Mammary epithelial cell (primary cell): ENCODE measurements at regions of chr7 and their contacts with region 1.

Region 1: GRCh38 chr7:29408841-29409243 is 154.8 kb upstream of the PRR15 start:
- DNase-seq: peak; percentile 70
- H3K4me3 ChIP-seq: no peak overlapping the region
- H3K27ac ChIP-seq: no peak overlapping the region
- H3K4me1 ChIP-seq: peaks cover 7% of the 10 kb centered on the region
- H3K27me3 ChIP-seq: no peaks in the 10 kb centered on the region
- CTCF ChIP-seq: peak; percentile 74 to 77

Region 2: GRCh38 chr7:28298870-28299518 is 1109.8 kb before region 1 on chr7:
- CTCF ChIA-PET with region 1: no interaction called
- dilution Hi-C with region 1: no loop called
- in situ Hi-C with region 1: no loop called
- intact Hi-C with region 1: loop called (anchors 2 kb)
- DNase-seq: peak; percentile 60
- H3K4me3 ChIP-seq: no peak overlapping the region
- H3K27ac ChIP-seq: no peak overlapping the region
- H3K4me1 ChIP-seq: peaks cover 13% of the 10 kb centered on the region
- H3K27me3 ChIP-seq: no peaks in the 10 kb centered on the region
- CTCF ChIP-seq: peak; percentile 54 to 68

Region 3: DNA sequence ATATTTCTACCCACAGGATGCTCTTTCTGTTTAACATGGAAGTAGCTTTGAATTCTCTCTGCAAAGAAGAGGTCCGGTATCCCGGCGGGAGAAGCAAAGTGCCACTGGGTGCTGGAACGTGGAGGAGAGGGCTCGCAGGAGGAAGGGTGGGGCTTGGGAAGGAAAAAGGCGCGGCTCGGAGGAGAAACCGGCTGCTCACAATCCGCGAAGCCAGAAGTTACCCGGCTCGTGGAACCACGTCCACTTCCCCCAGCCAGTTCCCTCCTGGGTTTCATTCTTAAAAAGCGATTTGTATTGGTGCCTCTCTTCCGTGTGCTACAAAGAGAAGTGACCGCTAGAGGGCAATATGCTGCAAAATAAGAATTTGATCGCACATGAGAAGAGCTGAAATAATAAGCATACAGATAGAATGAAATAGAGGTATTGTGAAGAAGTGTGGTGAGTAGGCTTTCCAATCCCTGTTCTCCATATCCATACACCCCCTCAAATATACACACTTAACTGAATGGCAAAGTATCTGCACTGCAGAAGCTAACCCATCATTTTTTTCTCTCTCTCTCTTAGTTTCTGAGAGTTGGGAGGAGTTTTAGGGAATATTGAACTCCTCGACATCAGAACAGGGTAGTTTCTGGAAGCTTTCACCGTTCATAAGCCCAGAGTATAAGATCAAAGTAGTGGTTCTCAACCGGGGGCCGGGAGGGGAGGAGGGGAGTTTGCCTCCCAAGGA is 481.8 kb before region 1 on chr7:
- CTCF ChIA-PET with region 1: interaction called, 11 read pairs
- dilution Hi-C with region 1: loop called (anchors 5 kb)
- in situ Hi-C with region 1: loop called (anchors 5 kb)
- intact Hi-C with region 1: loop called (anchors 1 kb)
- DNase-seq: peak; percentile 74
- H3K4me3 ChIP-seq: peak overlapping the region; percentile 52 to 59 (median 58)
- H3K27ac ChIP-seq: no peak overlapping the region
- H3K4me1 ChIP-seq: peaks cover 5% of the 10 kb centered on the region
- H3K27me3 ChIP-seq: no peaks in the 10 kb centered on the region
- CTCF ChIP-seq: peak; percentile 76 to 77

Region 4: DNA sequence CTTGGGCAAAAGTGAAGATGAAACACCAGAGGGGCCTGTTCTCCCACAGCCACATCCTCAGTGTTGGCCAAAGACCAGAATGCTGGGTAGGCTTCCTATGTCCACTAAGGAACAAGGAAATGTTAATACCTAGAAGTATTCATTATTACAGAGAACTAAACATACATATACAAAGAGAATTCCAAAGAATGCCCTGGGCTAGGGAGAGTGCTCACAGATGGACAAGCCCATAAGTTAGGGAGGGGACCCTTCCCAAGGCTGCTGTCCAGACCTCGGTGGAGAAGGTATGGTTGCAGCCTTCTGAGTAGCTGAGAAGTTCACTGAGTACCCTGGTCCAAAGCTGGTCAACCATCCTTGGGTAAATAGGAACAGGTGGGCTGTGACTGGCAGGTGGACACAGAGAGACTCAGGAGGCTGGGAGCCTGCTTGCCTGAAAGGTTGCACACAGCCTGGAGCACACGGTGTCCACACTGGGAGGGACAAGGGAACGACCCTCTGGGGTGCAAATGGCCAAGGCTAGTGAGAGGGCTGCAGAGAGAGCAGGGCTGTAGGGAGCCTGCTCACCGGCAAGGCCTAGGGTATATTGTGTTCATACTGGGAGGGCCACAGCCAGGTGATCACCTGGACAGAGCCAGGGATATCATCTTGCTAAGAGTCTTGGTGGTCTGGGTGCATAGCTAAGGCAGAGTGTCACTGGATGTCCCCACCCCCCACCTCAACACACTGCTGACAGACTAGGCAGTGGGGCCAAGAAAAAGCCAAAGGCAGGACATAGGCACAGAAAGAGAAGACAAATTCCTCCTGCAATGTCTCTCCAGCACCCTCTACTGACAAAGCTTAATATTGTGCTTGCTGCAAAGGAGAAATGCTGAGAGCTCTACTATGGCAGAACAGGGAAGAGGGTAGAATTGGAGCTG is 302.8 kb before region 1 on chr7:
- CTCF ChIA-PET with region 1: no interaction called
- dilution Hi-C with region 1: no loop called
- in situ Hi-C with region 1: loop called (anchors 5 to 10 kb)
- intact Hi-C with region 1: loop called (anchors 1 kb)
- DNase-seq: peak; percentile 54
- H3K4me3 ChIP-seq: no peak overlapping the region
- H3K27ac ChIP-seq: no peak overlapping the region
- H3K4me1 ChIP-seq: peaks cover 21% of the 10 kb centered on the region
- H3K27me3 ChIP-seq: no peaks in the 10 kb centered on the region
- CTCF ChIP-seq: peak; percentile 89 to 93

Region 5: DNA sequence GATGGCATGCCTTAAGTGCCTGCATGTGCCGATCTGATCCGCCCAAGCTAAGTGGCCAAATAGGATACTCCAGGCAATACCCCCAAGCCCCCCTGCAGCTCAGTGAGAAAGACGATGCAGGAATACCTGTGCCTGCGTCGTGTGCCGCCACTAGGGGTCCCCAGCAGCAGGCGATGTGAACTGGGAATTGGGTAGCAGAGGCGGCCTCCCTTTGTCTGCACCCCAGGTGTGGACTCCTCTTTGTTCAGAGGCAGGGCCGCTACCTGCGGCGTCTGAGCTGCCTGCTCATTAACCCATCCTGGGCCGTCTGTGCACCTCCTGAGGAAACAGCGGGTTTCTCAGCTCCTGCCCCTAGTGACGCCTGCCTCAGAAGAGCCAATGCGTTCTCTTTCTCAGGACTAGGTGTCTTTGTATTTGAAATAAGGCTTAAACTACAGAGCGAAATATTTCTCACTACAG is 219.1 kb before region 1 on chr7:
- CTCF ChIA-PET with region 1: interaction called, 6 read pairs
- dilution Hi-C with region 1: no loop called
- in situ Hi-C with region 1: no loop called
- intact Hi-C with region 1: loop called (anchors 1 kb)
- DNase-seq: peak; percentile 34
- H3K4me3 ChIP-seq: no peak overlapping the region
- H3K27ac ChIP-seq: no peak overlapping the region
- H3K4me1 ChIP-seq: peaks cover 4% of the 10 kb centered on the region
- H3K27me3 ChIP-seq: peaks cover 2% of the 10 kb centered on the region
- CTCF ChIP-seq: peak; percentile 83 to 92

Region 6: GRCh38 chr7:29328811-29329210 is 80.0 kb before region 1 on chr7:
- CTCF ChIA-PET with region 1: no interaction called
- dilution Hi-C with region 1: no loop called
- in situ Hi-C with region 1: no loop called
- intact Hi-C with region 1: no loop called
- DNase-seq: no peak
- H3K4me3 ChIP-seq: no peak overlapping the region
- H3K27ac ChIP-seq: no peak overlapping the region
- H3K4me1 ChIP-seq: no peaks in the 10 kb centered on the region
- H3K27me3 ChIP-seq: no peaks in the 10 kb centered on the region
- CTCF ChIP-seq: no peak

Region 7: GRCh38 chr7:29345600-29345999 is 63.2 kb before region 1 on chr7:
- CTCF ChIA-PET with region 1: interaction called, 3 read pairs
- dilution Hi-C with region 1: no loop called
- in situ Hi-C with region 1: no loop called
- intact Hi-C with region 1: loop called (anchors 5 kb)
- DNase-seq: peak; percentile 29
- H3K4me3 ChIP-seq: no peak overlapping the region
- H3K27ac ChIP-seq: no peak overlapping the region
- H3K4me1 ChIP-seq: peaks cover 36% of the 10 kb centered on the region
- H3K27me3 ChIP-seq: no peaks in the 10 kb centered on the region
- CTCF ChIP-seq: peak; percentile 52 to 73

Region 8: DNA sequence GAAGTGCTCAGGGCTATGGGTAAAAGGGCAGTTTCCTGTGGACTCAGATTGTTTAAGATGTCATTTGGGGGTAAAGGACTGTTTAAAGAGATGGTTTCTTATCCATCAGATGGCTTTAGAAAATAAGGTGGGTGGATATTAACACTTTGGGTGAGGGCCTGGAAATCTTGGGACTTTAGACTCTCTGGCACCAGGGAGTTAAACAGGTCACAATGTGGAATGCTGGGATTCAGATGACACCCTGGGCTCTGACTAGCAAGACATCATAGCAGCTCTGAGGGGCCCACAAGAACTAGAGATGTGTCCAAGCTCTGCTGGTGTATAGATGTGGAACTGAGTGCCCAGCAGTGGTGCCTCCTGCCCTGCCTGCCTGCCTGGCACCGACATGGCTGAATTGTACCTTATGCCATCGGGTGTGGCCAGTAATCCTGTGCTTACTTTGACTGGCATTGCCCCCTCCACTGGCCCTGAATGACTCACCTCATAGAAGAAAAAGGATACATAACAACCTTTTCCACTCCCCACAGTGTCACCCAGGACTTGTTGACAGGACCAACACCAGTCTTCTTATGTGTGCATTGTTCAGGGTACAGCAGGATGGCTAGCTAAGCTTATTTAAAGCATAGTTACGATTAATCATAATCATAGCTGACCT is 54.8 kb after region 1 on chr7:
- CTCF ChIA-PET with region 1: no interaction called
- dilution Hi-C with region 1: no loop called
- in situ Hi-C with region 1: no loop called
- intact Hi-C with region 1: no loop called
- DNase-seq: no peak
- H3K4me3 ChIP-seq: no peak overlapping the region
- H3K27ac ChIP-seq: no peak overlapping the region
- H3K4me1 ChIP-seq: no peaks in the 10 kb centered on the region
- H3K27me3 ChIP-seq: no peaks in the 10 kb centered on the region
- CTCF ChIP-seq: no peak

Region 9: DNA sequence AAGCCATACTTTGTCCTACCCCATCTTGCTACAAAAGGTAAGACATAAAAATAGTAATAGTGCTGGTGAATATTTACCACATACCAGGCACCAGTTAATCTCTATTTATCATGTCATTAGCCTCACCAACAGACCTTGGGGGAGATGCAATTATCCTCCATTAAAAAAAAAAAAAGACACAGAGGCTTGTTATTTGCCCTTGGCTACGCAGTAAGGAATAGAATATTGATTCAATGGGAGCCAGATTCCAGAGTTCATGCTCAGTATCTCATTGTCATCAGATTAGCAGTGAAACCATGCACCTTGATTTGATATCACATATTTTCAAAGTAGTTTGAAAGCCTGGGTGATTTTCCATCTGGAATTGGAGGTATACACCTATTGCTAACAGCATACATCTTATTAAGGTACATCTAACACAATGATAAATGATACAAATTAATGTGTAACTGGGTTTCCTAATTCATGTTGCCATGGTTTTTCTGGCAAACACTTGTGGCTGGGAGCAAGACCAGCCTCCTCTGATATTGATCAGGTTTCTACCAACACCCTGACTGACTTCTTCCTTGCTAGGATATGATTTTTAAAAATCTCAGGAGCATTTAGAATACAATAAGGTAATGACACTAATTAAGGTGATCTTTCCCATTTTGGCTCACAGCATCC is 87.6 kb after region 1 on chr7:
- CTCF ChIA-PET with region 1: no interaction called
- dilution Hi-C with region 1: no loop called
- in situ Hi-C with region 1: no loop called
- intact Hi-C with region 1: no loop called
- DNase-seq: no peak
- H3K4me3 ChIP-seq: no peak overlapping the region
- H3K27ac ChIP-seq: no peak overlapping the region
- H3K4me1 ChIP-seq: no peaks in the 10 kb centered on the region
- H3K27me3 ChIP-seq: no peaks in the 10 kb centered on the region
- CTCF ChIP-seq: no peak

Region 10: DNA sequence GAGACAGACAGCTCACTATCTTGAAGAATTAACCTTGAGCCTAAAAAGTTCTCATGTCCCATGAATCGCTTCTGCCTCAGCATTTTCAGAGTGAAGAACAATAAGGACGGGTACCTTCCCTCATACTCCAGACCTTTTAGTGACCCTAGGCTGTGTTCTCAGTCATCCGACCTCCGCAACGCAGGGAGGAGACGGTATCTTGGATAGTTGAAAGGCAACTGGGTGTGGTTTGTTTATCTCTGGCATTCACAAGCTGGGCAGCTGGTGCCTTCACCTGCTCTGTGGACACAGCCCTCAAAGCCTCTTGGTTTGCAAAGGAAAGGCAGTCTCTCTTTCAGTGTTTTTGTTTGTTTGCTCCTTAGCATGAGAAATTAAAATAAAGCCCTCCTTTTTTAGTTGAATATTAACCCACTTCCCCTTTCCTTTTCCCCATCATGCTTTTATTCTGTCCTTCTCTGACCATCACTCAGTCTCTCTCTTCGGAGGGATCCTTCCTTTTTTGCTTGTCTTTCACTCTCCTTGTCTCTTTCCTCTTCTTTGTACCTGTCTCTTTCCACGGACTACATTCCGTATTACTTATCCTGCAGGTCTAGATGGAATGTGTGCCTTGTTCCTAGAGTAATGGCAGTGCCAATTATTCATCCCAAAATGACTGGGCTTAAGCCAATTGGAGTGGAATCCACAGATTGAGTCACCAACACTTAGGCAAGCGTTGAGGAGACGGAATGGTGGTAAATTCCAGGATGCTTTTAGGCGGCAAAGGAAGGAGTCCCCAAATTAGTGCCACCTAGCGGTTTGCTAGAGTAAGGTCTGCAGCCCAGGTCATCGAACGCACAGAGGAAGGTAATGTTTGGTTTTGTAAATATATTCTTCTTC is 200.6 kb after region 1 on chr7:
- CTCF ChIA-PET with region 1: no interaction called
- dilution Hi-C with region 1: no loop called
- in situ Hi-C with region 1: no loop called
- intact Hi-C with region 1: loop called (anchors 2 kb)
- DNase-seq: peak; percentile 79
- H3K4me3 ChIP-seq: no peak overlapping the region
- H3K27ac ChIP-seq: no peak overlapping the region
- H3K4me1 ChIP-seq: peaks cover 55% of the 10 kb centered on the region
- H3K27me3 ChIP-seq: no peaks in the 10 kb centered on the region
- CTCF ChIP-seq: peak; percentile 86 to 94